Right ventricle myocardium inferior (tissue), 1 donor: ENCODE measurements at regions of chr9 and their contacts with region 1.

Region 1: GRCh38 chr9:83622939-83623678 is at the start of gene IDNK:
- DNase-seq: peak; percentile 87
- ATAC-seq: peak; percentile 93
- total RNA-seq, gene IDNK: 3.4 TPM

Region 2: GRCh38 chr9:83665580-83666200 is 42.6 kb after region 1 on chr9:
- intact Hi-C with region 1: no loop called
- DNase-seq: no peak
- ATAC-seq: no peak

Region 3: GRCh38 chr9:83707768-83708514 is 84.8 kb after region 1 on chr9 and contains the start of gene UBQLN1:
- intact Hi-C with region 1: loop called (anchors 5 kb)
- DNase-seq: peak; percentile 98
- ATAC-seq: peak; percentile 97
- total RNA-seq, gene UBQLN1: 78.7 TPM

Region 4: GRCh38 chr9:83919111-83919510 is 296.0 kb after region 1 on chr9:
- intact Hi-C with region 1: loop called (anchors 5 kb)
- DNase-seq: no peak
- ATAC-seq: no peak

Region 5: DNA sequence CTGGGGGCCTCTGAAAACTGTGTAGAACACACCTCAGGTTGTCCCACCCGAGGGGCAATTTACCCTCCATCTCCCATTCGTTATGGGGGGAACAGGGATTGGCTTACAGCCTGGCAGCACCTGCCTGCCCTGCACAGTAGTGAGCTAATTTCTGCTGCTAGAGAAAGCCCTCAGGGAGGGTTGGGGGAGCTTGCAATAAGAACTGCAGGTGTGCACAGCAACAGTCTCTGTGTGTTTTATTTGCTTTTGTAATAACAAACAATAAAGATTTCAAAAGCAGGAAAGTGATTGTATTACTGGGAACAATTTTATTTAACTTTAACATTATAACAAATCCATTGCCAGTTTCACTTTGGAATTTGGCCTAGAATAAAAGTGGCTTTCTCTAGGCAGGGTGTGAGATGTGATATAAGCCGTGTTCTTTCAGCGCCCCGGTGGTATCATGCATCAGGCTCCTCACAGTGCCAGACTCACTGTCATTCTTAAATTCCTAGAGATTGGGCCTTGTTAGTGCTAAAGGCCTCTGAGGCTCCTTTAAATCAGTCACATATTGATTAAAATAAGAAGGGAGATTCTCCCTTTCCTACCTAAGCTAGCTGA is 438.6 kb after region 1 on chr9:
- intact Hi-C with region 1: no loop called
- DNase-seq: no peak
- ATAC-seq: peak; percentile 88